GM12878 (cell line): ENCODE measurements at regions of chr7 and their contacts with region 1.

Region 1: DNA sequence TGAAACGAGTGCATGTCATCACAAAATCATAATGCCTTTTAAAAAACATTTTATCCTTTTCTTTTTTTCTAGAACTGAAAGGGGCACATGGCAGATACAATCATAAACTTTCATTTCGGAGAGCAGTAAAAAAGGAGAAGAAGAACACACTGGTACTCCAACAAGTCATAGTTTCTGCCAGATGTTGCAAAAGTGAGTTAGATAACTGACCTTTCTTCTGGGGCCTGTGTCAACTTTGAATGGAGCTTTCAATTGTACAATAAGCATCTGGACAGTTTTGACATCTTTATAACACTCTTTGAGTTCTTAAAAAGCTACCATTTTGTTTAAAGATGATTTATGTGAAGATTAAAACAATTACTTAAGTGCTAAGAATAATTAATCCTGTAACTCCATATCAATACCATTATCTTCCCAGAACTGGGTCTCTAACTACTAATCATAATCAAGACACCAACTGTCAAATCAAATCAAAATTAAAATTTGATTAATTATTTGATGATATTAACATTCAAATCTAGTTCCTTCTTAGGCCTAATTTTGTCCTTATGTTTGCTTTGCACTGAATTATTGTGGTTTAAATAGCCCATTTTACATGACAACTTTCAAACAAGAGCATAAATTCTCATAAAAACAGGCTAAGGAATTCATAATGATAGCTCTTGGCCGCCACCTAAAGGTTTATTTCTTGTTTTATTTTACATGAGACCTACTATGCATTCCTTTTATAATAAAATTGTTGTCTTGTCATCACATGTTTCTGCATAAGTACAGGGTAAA is 19.5 kb upstream of the ITGB8 start:
- DNase-seq: peak; percentile 61
- ATAC-seq: peak; percentile 64
- H3K4me3 ChIP-seq: no peak overlapping the region
- H3K27ac ChIP-seq: no peak overlapping the region
- H3K4me1 ChIP-seq: peaks cover 4% of the 10 kb centered on the region; the same call in 1 of the 2 replicates
- H3K27me3 ChIP-seq: no peaks in the 10 kb centered on the region
- CTCF ChIP-seq: peak; percentile 16 to 62 (median 39); a peak in 4 of 6 replicates
- EP300 ChIP-seq: no peak
- POLR2A ChIP-seq: no peak
- RAD21 ChIP-seq: peak; percentile 79

Region 2: DNA sequence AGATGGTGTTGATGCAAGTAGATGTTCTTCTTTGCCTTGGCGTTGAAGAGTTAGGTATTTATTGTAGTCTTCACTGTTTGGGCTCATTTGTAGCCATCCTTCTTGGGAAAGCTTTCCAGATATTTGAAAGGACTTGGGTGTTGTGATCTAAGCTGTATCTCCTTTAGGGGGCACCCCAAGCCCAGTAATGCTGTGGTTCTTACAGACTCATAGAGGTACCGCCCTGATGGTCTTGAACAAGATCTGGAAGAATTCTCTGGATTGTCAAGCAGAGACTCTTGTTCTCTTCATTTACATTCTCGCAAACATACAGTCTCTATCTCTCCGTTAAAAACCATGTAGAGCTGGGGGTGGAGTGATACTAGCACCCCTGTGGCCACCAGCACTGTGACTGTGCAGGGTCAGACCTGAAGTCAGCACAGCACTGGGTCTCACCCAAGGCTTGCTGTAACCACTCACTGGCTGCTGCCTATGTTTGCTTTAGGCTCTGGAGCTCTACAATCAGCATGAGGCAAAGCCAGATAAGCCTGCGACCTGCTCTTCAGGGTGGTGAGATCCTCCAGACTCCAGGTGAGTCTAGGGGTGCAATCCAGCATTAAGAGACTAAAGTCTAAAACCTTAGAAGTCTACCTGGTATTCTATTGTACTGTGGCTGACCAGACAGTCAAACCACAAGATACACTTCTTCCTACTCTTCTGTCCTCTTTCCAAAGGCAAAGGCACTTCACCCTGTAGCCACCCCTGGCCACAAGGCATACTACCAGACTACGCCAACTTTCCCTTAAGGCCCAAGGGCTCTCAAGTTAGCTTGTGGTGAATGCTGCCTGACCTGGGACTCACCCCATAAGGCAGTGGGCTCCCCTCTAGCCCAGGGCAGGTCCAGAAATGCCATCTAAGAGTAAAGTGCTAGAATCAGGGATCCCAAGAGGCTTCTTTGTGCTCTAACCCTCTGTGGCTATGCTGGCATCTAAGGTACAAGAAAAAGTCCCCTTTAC is 328.0 kb before region 1 on chr7:
- CTCF ChIA-PET with region 1: interaction called, 113 read pairs
- POLR2A ChIA-PET with region 1: interaction called, 3 read pairs
- RAD21 ChIA-PET with region 1: interaction called, 42 read pairs
- SMC1A ChIA-PET with region 1: interaction called, 74 read pairs
- in situ Hi-C with region 1: loop called (anchors 5 kb)
- intact Hi-C with region 1: loop called (anchors 1 kb)
- DNase-seq: peak; percentile 38
- ATAC-seq: peak; percentile 86
- H3K4me3 ChIP-seq: no peak overlapping the region
- H3K27ac ChIP-seq: no peak overlapping the region
- H3K4me1 ChIP-seq: no peaks in the 10 kb centered on the region; the same call in 1 of the 2 replicates
- H3K27me3 ChIP-seq: no peaks in the 10 kb centered on the region
- CTCF ChIP-seq: peak; percentile 43 to 55 (median 46); a peak in 5 of 6 replicates
- EP300 ChIP-seq: no peak
- POLR2A ChIP-seq: no peak
- RAD21 ChIP-seq: peak; percentile 89

Region 3: GRCh38 chr7:20193227-20193777 is 117.9 kb before region 1 on chr7:
- CTCF ChIA-PET with region 1: interaction called, 49 read pairs
- POLR2A ChIA-PET with region 1: interaction called, 4 read pairs
- RAD21 ChIA-PET with region 1: interaction called, 57 read pairs
- SMC1A ChIA-PET with region 1: interaction called, 22 read pairs
- in situ Hi-C with region 1: no loop called
- intact Hi-C with region 1: no loop called
- DNase-seq: no peak
- ATAC-seq: peak; percentile 83
- H3K4me3 ChIP-seq: no peak overlapping the region
- H3K27ac ChIP-seq: peak overlapping the region; percentile 63
- H3K4me1 ChIP-seq: peaks cover 24% of the 10 kb centered on the region
- H3K27me3 ChIP-seq: no peaks in the 10 kb centered on the region
- CTCF ChIP-seq: no peak
- EP300 ChIP-seq: peak; percentile 48 to 58; a peak in 2 of 4 replicates
- POLR2A ChIP-seq: no peak
- RAD21 ChIP-seq: no peak

Region 4: DNA sequence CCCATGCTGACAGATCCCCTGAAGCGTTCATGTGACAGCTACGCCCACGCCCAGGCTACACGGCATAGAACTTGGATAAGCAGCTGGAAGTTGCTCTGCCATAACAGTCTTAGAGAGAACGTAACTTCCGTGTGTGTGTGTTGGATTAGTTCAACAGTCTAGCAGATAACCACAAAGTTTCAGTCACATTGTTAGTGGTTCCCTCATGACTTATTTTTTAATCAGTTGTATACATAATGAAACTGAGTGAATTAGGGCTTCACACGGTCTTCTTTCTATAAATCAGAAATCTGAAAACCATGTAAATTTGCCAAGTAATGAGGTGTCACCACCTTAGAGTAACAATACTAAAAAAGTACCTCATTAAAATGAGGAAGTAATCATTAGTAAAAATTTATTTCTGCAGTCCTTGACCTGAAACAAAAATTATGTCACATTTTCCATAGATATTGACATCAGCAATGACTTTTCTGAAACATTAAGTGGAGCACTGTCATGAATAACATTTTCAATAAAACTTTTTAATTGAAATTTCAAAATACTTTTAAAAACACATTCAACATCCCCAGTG is 72.3 kb before region 1 on chr7:
- CTCF ChIA-PET with region 1: interaction called, 14 read pairs
- POLR2A ChIA-PET with region 1: interaction called, 3 read pairs
- RAD21 ChIA-PET with region 1: interaction called, 32 read pairs
- SMC1A ChIA-PET with region 1: interaction called, 229 read pairs
- in situ Hi-C with region 1: no loop called
- intact Hi-C with region 1: loop called (anchors 1 kb)
- DNase-seq: peak; percentile 98
- ATAC-seq: peak; percentile 72
- H3K4me3 ChIP-seq: peak overlapping the region; percentile 35; the same call in 1 of the 2 replicates
- H3K27ac ChIP-seq: peak overlapping the region; percentile 76
- H3K4me1 ChIP-seq: peaks cover 49% of the 10 kb centered on the region
- H3K27me3 ChIP-seq: no peaks in the 10 kb centered on the region
- CTCF ChIP-seq: no peak
- EP300 ChIP-seq: peak; percentile 99 to 100
- POLR2A ChIP-seq: peak; percentile 29; the same call in 1 of the 2 replicates
- RAD21 ChIP-seq: no peak

Region 5: GRCh38 chr7:20299647-20300312 is 11.4 kb before region 1 on chr7:
- CTCF ChIA-PET with region 1: interaction called, 20 read pairs
- POLR2A ChIA-PET with region 1: interaction called, 3 read pairs
- RAD21 ChIA-PET with region 1: interaction called, 35 read pairs
- SMC1A ChIA-PET with region 1: interaction called, 43 read pairs
- in situ Hi-C with region 1: no loop called
- intact Hi-C with region 1: no loop called
- DNase-seq: peak; percentile 83
- ATAC-seq: peak; percentile 70
- H3K4me3 ChIP-seq: no peak overlapping the region
- H3K27ac ChIP-seq: peak overlapping the region; percentile 76
- H3K4me1 ChIP-seq: peaks cover 16% of the 10 kb centered on the region
- H3K27me3 ChIP-seq: no peaks in the 10 kb centered on the region
- CTCF ChIP-seq: no peak
- EP300 ChIP-seq: no peak
- POLR2A ChIP-seq: no peak
- RAD21 ChIP-seq: no peak

Region 6: GRCh38 chr7:20532890-20533289 is 221.7 kb after region 1 on chr7:
- CTCF ChIA-PET with region 1: no interaction called
- POLR2A ChIA-PET with region 1: no interaction called
- RAD21 ChIA-PET with region 1: no interaction called
- SMC1A ChIA-PET with region 1: no interaction called
- in situ Hi-C with region 1: no loop called
- intact Hi-C with region 1: no loop called
- DNase-seq: no peak
- ATAC-seq: no peak
- H3K4me3 ChIP-seq: no peak overlapping the region
- H3K27ac ChIP-seq: no peak overlapping the region
- H3K4me1 ChIP-seq: no peaks in the 10 kb centered on the region
- H3K27me3 ChIP-seq: no peaks in the 10 kb centered on the region; a peak in 1 of 4 replicates
- CTCF ChIP-seq: no peak
- EP300 ChIP-seq: no peak
- POLR2A ChIP-seq: no peak
- RAD21 ChIP-seq: no peak

Region 7: GRCh38 chr7:20598459-20599309 is 287.5 kb after region 1 on chr7:
- CTCF ChIA-PET with region 1: interaction called, 15 read pairs
- POLR2A ChIA-PET with region 1: no interaction called
- RAD21 ChIA-PET with region 1: interaction called, 15 read pairs
- SMC1A ChIA-PET with region 1: interaction called, 4 read pairs
- in situ Hi-C with region 1: no loop called
- intact Hi-C with region 1: no loop called
- DNase-seq: peak; percentile 43
- ATAC-seq: peak; percentile 88
- H3K4me3 ChIP-seq: no peak overlapping the region
- H3K27ac ChIP-seq: no peak overlapping the region
- H3K4me1 ChIP-seq: no peaks in the 10 kb centered on the region
- H3K27me3 ChIP-seq: no peaks in the 10 kb centered on the region
- CTCF ChIP-seq: peak; percentile 69 to 91 (median 84)
- EP300 ChIP-seq: no peak
- POLR2A ChIP-seq: no peak
- RAD21 ChIP-seq: peak; percentile 98